Activated CD4-positive, alpha-beta memory T cell treated with anti-CD3 and anti-CD28 coated beads, Interleukin-2, amount 10 ng/mL, durations not matched to agents 7 days and 5 days (primary cell): ENCODE measurements at regions of chr11 and their contacts with region 1.

Region 1: GRCh38 chr11:46352063-46352841 is 5.0 kb downstream of the DGKZ start:
- DNase-seq: peak; percentile 80
- H3K4me3 Mint-ChIP-seq: peak overlapping the region; percentile 74
- H3K27ac Mint-ChIP-seq: peak overlapping the region; percentile 73
- H3K4me1 Mint-ChIP-seq: peaks cover 71% of the 10 kb centered on the region
- H3K27me3 Mint-ChIP-seq: no peaks in the 10 kb centered on the region

Region 2: GRCh38 chr11:46330890-46331652 is 21.2 kb before region 1 on chr11:
- CTCF ChIA-PET with region 1: interaction called, 10 read pairs
- POLR2A ChIA-PET with region 1: interaction called, 5 read pairs
- DNase-seq: peak; percentile 46
- H3K4me3 Mint-ChIP-seq: no peak overlapping the region
- H3K27ac Mint-ChIP-seq: no peak overlapping the region
- H3K4me1 Mint-ChIP-seq: peaks cover 29% of the 10 kb centered on the region
- H3K27me3 Mint-ChIP-seq: peaks cover 61% of the 10 kb centered on the region